GM23248 (cell line): ENCODE measurements at regions of chr16 and their contacts with region 1.

Region 1: GRCh38 chr16:4330277-4330874 is 14.5 kb downstream of the GLIS2 start:
- DNase-seq: peak; percentile 81
- H3K4me3 ChIP-seq: no peak overlapping the region
- H3K27ac ChIP-seq: no peak overlapping the region
- H3K4me1 ChIP-seq: peaks cover 8% of the 10 kb centered on the region; the same call in 1 of the 2 replicates
- H3K27me3 ChIP-seq: no peaks in the 10 kb centered on the region

Region 2: GRCh38 chr16:4200000-4200780 is 130.2 kb before region 1 on chr16:
- in situ Hi-C with region 1: loop called (anchors 10 kb)
- DNase-seq: peak; percentile 80
- H3K4me3 ChIP-seq: no peak overlapping the region
- H3K27ac ChIP-seq: peak overlapping the region; percentile 67
- H3K4me1 ChIP-seq: peaks cover 12% of the 10 kb centered on the region
- H3K27me3 ChIP-seq: no peaks in the 10 kb centered on the region

Region 3: DNA sequence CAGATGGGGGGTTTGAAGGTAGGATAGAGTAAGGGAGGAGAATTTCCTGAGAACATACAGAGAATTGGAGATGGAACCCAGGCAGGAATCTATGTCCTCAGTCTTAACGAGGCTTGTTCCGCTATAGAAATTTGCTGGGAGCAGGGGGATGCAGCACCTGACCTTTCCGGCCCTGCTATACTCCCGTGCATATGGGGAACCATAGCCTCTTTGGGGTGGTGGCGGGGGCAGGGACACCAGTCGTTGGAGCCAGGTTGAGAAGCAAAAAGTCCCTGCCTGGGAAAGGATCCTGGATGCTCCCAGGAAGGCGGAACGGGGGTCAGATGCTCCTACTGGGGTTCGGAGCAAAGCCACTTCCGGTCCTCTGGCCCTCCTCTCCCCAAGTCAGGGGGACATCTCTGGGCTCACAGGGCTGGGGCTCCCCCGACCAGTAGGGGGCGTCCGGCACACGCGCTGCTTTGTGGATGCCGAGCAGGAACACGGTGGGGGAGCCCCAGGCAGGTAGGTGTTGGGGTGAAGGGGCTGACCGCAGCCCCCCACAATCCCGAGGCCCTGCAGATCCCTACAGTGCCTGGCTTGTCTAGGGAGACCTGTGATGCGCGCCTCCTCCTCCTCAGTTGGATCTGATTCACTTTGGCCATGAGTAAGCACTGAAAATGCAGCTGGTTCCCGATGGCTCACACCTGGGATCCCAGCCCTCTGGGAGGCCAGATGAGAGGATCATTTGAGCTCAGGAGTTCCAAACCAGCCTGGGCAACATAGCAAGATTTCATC is 42.0 kb before region 1 on chr16:
- in situ Hi-C with region 1: loop called (anchors 5 kb)
- DNase-seq: peak; percentile 89
- H3K4me3 ChIP-seq: no peak overlapping the region
- H3K27ac ChIP-seq: no peak overlapping the region
- H3K4me1 ChIP-seq: peaks cover 20% of the 10 kb centered on the region
- H3K27me3 ChIP-seq: no peaks in the 10 kb centered on the region